ENCODE measurements at regions of chr12 and their contacts with region 1.

Region 1: DNA sequence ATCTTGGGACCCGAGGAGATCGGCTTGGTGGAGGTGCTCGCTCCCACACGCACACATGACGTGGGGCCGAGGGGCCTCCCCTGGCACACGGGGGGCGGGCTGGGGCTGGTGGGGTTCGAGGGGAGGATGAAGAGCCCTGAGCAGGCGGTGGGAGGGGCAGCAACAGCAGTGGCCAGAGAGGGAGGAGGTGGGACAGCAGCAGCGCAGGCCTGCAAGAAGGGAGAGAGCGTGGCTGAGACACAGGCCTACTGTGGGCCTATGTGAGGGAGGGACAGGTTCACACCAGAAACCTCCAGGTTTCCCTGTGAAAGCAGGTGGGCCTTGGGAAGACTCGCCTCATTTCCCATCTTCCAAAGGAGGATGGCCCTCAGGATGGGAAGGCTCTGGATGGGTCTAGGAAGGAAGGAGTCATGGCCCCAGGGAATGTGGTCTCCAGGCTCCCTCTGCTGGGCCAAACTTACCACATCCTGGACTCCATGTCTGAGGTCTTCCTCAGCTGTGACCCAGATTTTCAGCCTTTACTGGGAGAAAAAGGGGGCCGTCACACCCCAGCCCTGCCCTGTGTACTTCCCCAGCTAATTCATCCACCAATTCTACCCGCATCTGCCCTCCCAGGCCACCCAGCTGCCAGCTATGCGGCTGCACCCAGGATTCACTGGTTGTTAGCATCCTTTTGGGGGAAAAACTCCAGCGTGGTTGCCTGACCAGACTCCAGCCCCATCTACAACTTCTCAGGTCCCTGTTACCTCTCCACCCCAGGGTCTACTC is 2.8 kb downstream of the PIANP start:
- DNase-seq: peak in 2 of 3 donors; percentile 22 to 38
- H3K4me3 ChIP-seq: no peak overlapping the region
- H3K4me3 Mint-ChIP-seq: peak overlapping the region in 1 of 2 donors; percentile 74
- H3K27ac ChIP-seq: no peak overlapping the region
- H3K27ac Mint-ChIP-seq: no peak overlapping the region
- H3K4me1 ChIP-seq: peaks cover 7 to 12% of the 10 kb centered on the region in 2 donors
- H3K4me1 Mint-ChIP-seq: peaks cover 26% of the 10 kb centered on the region
- H3K27me3 ChIP-seq: peaks cover 43 to 52% of the 10 kb centered on the region in 2 donors
- H3K27me3 Mint-ChIP-seq: peaks cover 60 to 76% (median 61%) of the 10 kb centered on the region in 3 donors
- CTCF ChIP-seq: peak; percentile 58

Region 2: GRCh38 chr12:6614513-6615172 is 83.1 kb before region 1 on chr12:
- intact Hi-C with region 1: loop called in 1 of 2 experiments (anchors 5 kb)
- DNase-seq: no peak
- H3K4me3 ChIP-seq: peak overlapping the region in 1 of 3 experiments; percentile 32
- H3K4me3 Mint-ChIP-seq: no peak overlapping the region
- H3K27ac ChIP-seq: peak overlapping the region; percentile 51 to 72
- H3K27ac Mint-ChIP-seq: peak overlapping the region; percentile 36 to 92 (median 87)
- H3K4me1 ChIP-seq: peaks cover 44 to 49% of the 10 kb centered on the region in 2 donors
- H3K4me1 Mint-ChIP-seq: peaks cover 61% of the 10 kb centered on the region
- H3K27me3 ChIP-seq: no peaks in the 10 kb centered on the region
- H3K27me3 Mint-ChIP-seq: peaks cover 0 to 3% (median 3%) of the 10 kb centered on the region in 3 donors
- CTCF ChIP-seq: no peak

Region 3: GRCh38 chr12:6647083-6647604 is 50.6 kb before region 1 on chr12 and contains the start of gene ACRBP:
- intact Hi-C with region 1: loop called in 1 of 2 experiments (anchors 10 kb)
- DNase-seq: peak; percentile 78 to 87 (median 80)
- H3K4me3 ChIP-seq: peak within 1 kb of the TSS; percentile 48 to 83 (median 59)
- H3K4me3 Mint-ChIP-seq: peak within 1 kb of the TSS; percentile 93 to 94
- H3K27ac ChIP-seq: peak within 1 kb of the TSS; percentile 64 to 90
- H3K27ac Mint-ChIP-seq: peak within 1 kb of the TSS; percentile 91 to 96 (median 94)
- H3K4me1 ChIP-seq: peaks cover 43 to 53% of the 10 kb centered on the region in 2 donors
- H3K4me1 Mint-ChIP-seq: peaks cover 45% of the 10 kb centered on the region
- H3K27me3 ChIP-seq: no peaks in the 10 kb centered on the region
- H3K27me3 Mint-ChIP-seq: peaks cover 0 to 2% (median 0%) of the 10 kb centered on the region in 3 donors
- CTCF ChIP-seq: no peak
- polyA plus RNA-seq, gene ACRBP: 10.2 to 28.3 (median 10.3) TPM

Region 4: DNA sequence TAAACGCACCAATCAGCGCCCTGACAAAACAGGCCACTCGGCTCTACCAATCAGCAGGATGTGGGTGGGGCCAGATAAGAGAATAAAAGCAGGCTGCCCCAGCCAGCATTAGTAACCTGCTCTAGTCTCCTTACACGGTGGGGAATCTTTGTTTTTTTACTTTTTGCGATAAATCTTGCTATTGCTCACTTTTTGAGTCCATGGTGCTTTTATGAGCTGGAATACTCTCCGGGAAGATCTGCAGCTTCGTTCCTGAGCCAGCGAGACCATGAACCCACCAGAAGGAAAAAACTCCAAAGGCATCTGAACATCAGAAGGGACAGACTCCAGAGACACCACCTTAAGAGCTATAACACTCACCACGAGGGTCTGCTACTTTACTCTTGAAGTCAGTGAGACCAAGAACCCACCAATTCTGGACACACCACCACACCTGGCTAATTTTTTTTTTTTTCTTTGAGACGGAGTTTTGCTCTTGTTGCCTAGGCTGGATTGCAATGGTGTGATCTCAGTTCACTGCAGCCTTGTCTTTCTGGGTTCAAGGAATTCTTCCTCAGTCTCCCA is 19.2 kb after region 1 on chr12:
- intact Hi-C with region 1: no loop called
- DNase-seq: no peak
- H3K4me3 ChIP-seq: no peak overlapping the region
- H3K4me3 Mint-ChIP-seq: no peak overlapping the region
- H3K27ac ChIP-seq: no peak overlapping the region
- H3K27ac Mint-ChIP-seq: no peak overlapping the region
- H3K4me1 ChIP-seq: no peaks in the 10 kb centered on the region
- H3K4me1 Mint-ChIP-seq: no peaks in the 10 kb centered on the region
- H3K27me3 ChIP-seq: no peaks in the 10 kb centered on the region
- H3K27me3 Mint-ChIP-seq: peaks cover 4 to 12% (median 6%) of the 10 kb centered on the region in 3 donors
- CTCF ChIP-seq: no peak

Measured in CD14-positive monocyte (primary cell).